Panc1 (cell line): ENCODE measurements at regions of chr1 and their contacts with region 1.

Region 1: GRCh38 chr1:41783189-41783639 is 135.5 kb downstream of the HIVEP3 start:
- DNase-seq: peak; percentile 87
- ATAC-seq: peak; percentile 94
- H3K4me3 ChIP-seq: peak overlapping the region in 1 of 2 experiments; percentile 15; a peak in 1 of 4 replicates
- H3K27ac ChIP-seq: 0 out of 2 replicates have a peak overlapping the region, but pooled peaks have one; percentile 8
- H3K4me1 ChIP-seq: no peaks in the 10 kb centered on the region
- H3K27me3 ChIP-seq: no peaks in the 10 kb centered on the region
- CTCF ChIP-seq: no peak

Region 2: DNA sequence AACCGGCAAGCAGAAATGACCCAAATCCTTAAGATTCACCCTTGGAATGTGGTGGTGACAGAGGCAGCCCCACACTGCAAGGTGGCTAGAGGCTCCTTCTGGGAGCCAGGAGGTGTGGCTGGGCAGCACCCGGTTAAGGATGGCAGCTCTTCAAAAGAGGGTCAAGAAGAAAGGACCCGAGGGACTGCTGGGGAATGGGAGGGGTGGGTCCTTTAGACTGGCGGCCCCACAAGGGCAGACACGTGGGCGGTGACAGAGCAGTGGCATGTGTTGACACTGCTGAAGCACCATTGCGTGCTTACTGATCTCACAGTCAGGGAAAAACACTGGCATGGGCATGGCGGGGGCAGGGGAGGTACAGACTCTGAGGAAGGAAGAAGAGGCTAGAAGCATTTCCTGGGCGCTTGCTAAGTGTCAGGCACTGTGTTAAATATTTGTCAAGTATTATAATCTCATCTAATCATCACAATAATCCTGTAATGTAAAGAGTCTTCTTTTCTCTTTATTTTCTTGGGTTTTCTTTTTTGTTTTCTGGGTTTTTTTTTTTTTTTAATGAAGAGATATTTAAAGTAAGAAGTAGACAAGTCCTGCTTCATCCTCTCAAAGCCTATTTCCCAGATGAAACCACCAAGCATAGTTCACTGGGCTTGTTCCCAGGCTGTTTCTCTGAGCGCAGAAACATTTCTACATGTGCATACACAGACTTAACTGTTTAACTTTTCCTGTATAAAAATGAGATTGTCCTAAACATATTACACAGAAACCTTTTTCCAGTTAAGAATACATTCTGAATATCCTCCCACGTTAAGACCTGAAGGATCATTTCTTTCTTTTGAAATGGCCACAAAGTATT is 133.0 kb before region 1 on chr1:
- CTCF ChIA-PET with region 1: interaction called, 5 read pairs
- POLR2A ChIA-PET with region 1: interaction called, 11 read pairs
- in situ Hi-C with region 1: no loop called
- intact Hi-C with region 1: no loop called
- DNase-seq: no peak
- ATAC-seq: peak; percentile 44; the same call in 1 of the 2 replicates
- H3K4me3 ChIP-seq: no peak overlapping the region
- H3K27ac ChIP-seq: no peak overlapping the region
- H3K4me1 ChIP-seq: no peaks in the 10 kb centered on the region; the same call in none of the 2 replicates
- H3K27me3 ChIP-seq: no peaks in the 10 kb centered on the region
- CTCF ChIP-seq: no peak